B cell (primary cell): ENCODE measurements at regions of chr9 and their contacts with region 1.

Region 1: GRCh38 chr9:34637356-34638137 is at the start of gene SIGMAR1:
- DNase-seq: peak; percentile 96
- ATAC-seq: peak; percentile 96
- H3K4me3 ChIP-seq: peak within 1 kb of the TSS; percentile 49 to 80 (median 63)
- H3K4me3 Mint-ChIP-seq: peak within 1 kb of the TSS; percentile 92
- H3K27ac ChIP-seq: peak within 1 kb of the TSS; percentile 56 to 69
- H3K27ac Mint-ChIP-seq: peak within 1 kb of the TSS; percentile 86
- H3K4me1 ChIP-seq: peaks cover 16 to 32% of the 10 kb centered on the region in 2 donors
- H3K4me1 Mint-ChIP-seq: peaks cover 30% of the 10 kb centered on the region
- H3K27me3 ChIP-seq: no peaks in the 10 kb centered on the region
- H3K27me3 Mint-ChIP-seq: no peaks in the 10 kb centered on the region
- CTCF ChIP-seq: no peak
- total RNA-seq, gene SIGMAR1: 21.4 and 23.0 TPM in 2 replicates

Region 2: GRCh38 chr9:34437006-34437925 is 200.3 kb before region 1 on chr9:
- CTCF ChIA-PET with region 1: interaction called, 13 read pairs
- POLR2A ChIA-PET with region 1: no interaction called
- intact Hi-C with region 1: loop called (anchors 2 kb)
- DNase-seq: peak; percentile 81
- ATAC-seq: peak; percentile 65
- H3K4me3 ChIP-seq: no peak overlapping the region
- H3K4me3 Mint-ChIP-seq: no peak overlapping the region
- H3K27ac ChIP-seq: no peak overlapping the region
- H3K27ac Mint-ChIP-seq: no peak overlapping the region
- H3K4me1 ChIP-seq: no peaks in the 10 kb centered on the region
- H3K4me1 Mint-ChIP-seq: no peaks in the 10 kb centered on the region
- H3K27me3 ChIP-seq: no peaks in the 10 kb centered on the region
- H3K27me3 Mint-ChIP-seq: no peaks in the 10 kb centered on the region
- CTCF ChIP-seq: peak; percentile 82

Region 3: GRCh38 chr9:34500623-34501267 is 136.8 kb before region 1 on chr9:
- CTCF ChIA-PET with region 1: interaction called, 10 read pairs
- POLR2A ChIA-PET with region 1: no interaction called
- intact Hi-C with region 1: no loop called
- DNase-seq: peak; percentile 78
- ATAC-seq: peak; percentile 86
- H3K4me3 ChIP-seq: no peak overlapping the region
- H3K4me3 Mint-ChIP-seq: no peak overlapping the region
- H3K27ac ChIP-seq: no peak overlapping the region
- H3K27ac Mint-ChIP-seq: no peak overlapping the region
- H3K4me1 ChIP-seq: peaks cover 0 to 3% of the 10 kb centered on the region in 2 donors
- H3K4me1 Mint-ChIP-seq: no peaks in the 10 kb centered on the region
- H3K27me3 ChIP-seq: peaks cover 0 to 10% (median 3%) of the 10 kb centered on the region in 4 experiments
- H3K27me3 Mint-ChIP-seq: peaks cover 38% of the 10 kb centered on the region
- CTCF ChIP-seq: peak; percentile 98

Region 4: GRCh38 chr9:34577400-34578240 is 59.9 kb before region 1 on chr9:
- CTCF ChIA-PET with region 1: no interaction called
- POLR2A ChIA-PET with region 1: no interaction called
- intact Hi-C with region 1: no loop called
- DNase-seq: no peak
- ATAC-seq: no peak
- H3K4me3 ChIP-seq: peak overlapping the region in 1 of 5 experiments; percentile 7
- H3K4me3 Mint-ChIP-seq: peak overlapping the region; percentile 54
- H3K27ac ChIP-seq: no peak overlapping the region
- H3K27ac Mint-ChIP-seq: no peak overlapping the region
- H3K4me1 ChIP-seq: peaks cover 7 to 15% of the 10 kb centered on the region in 2 donors
- H3K4me1 Mint-ChIP-seq: peaks cover 12% of the 10 kb centered on the region
- H3K27me3 ChIP-seq: peaks cover 0 to 74% (median 28%) of the 10 kb centered on the region in 4 experiments
- H3K27me3 Mint-ChIP-seq: peaks cover 75% of the 10 kb centered on the region
- CTCF ChIP-seq: no peak

Region 5: DNA sequence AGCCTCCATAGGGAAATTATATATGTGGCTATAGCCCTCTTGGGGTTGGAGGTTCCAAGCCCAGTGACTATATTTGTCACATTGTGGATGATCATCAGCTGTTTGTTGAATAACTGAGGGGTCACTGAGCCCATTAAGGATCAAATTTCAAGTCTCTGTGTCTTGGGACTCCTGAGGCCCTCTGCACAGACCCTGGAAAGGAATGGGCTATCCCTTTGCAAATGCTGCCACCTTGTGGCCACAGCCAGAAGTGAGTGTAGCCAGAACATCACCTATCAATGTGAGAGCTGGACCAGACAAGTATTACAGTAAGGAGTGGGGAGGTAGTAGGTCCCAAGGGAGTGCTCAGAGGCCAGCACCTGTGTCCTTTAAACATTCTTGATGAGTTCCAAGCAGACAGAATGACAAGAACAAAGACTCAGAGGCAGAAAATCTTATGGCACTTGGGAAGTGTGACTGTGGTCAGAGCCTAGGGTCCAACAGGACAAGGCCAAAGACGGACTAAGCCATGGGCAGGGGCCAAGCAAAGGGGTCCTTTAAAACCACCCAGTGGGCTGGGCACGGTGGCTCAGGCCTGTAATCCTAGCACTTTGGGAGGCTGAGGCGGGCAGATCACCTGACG is 33.8 kb before region 1 on chr9:
- CTCF ChIA-PET with region 1: interaction called, 75 read pairs
- POLR2A ChIA-PET with region 1: no interaction called
- intact Hi-C with region 1: no loop called
- DNase-seq: peak; percentile 82
- ATAC-seq: peak; percentile 94
- H3K4me3 ChIP-seq: no peak overlapping the region
- H3K4me3 Mint-ChIP-seq: no peak overlapping the region
- H3K27ac ChIP-seq: no peak overlapping the region
- H3K27ac Mint-ChIP-seq: no peak overlapping the region
- H3K4me1 ChIP-seq: no peaks in the 10 kb centered on the region
- H3K4me1 Mint-ChIP-seq: no peaks in the 10 kb centered on the region
- H3K27me3 ChIP-seq: peaks cover 0 to 10% (median 0%) of the 10 kb centered on the region in 4 experiments
- H3K27me3 Mint-ChIP-seq: peaks cover 13% of the 10 kb centered on the region
- CTCF ChIP-seq: peak; percentile 91

Region 6: GRCh38 chr9:34620061-34620994 is 17.2 kb before region 1 on chr9 and contains the start of gene DCTN3:
- CTCF ChIA-PET with region 1: interaction called, 150 read pairs
- POLR2A ChIA-PET with region 1: interaction called, 11 read pairs
- intact Hi-C with region 1: loop called (anchors 2 kb)
- DNase-seq: peak; percentile 94
- ATAC-seq: peak; percentile 95
- H3K4me3 ChIP-seq: peak within 1 kb of the TSS; percentile 66 to 96 (median 81)
- H3K4me3 Mint-ChIP-seq: peak within 1 kb of the TSS; percentile 97
- H3K27ac ChIP-seq: peak within 1 kb of the TSS in 1 of 2 donors; percentile 49
- H3K27ac Mint-ChIP-seq: peak within 1 kb of the TSS; percentile 92
- H3K4me1 ChIP-seq: peaks cover 33 to 43% of the 10 kb centered on the region in 2 donors
- H3K4me1 Mint-ChIP-seq: peaks cover 36% of the 10 kb centered on the region
- H3K27me3 ChIP-seq: peaks cover 0 to 45% (median 30%) of the 10 kb centered on the region in 4 experiments
- H3K27me3 Mint-ChIP-seq: peaks cover 32% of the 10 kb centered on the region
- CTCF ChIP-seq: no peak
- total RNA-seq, gene DCTN3: 48.2 and 55.3 TPM in 2 replicates

Region 7: GRCh38 chr9:34701769-34702736 is 64.5 kb after region 1 on chr9:
- CTCF ChIA-PET with region 1: interaction called, 7 read pairs
- POLR2A ChIA-PET with region 1: no interaction called
- intact Hi-C with region 1: loop called (anchors 2 kb)
- DNase-seq: peak; percentile 80
- ATAC-seq: peak; percentile 76
- H3K4me3 ChIP-seq: peak overlapping the region; percentile 12 to 63 (median 55)
- H3K4me3 Mint-ChIP-seq: peak overlapping the region; percentile 88
- H3K27ac ChIP-seq: no peak overlapping the region
- H3K27ac Mint-ChIP-seq: no peak overlapping the region
- H3K4me1 ChIP-seq: peaks cover 10 to 14% of the 10 kb centered on the region in 2 donors
- H3K4me1 Mint-ChIP-seq: peaks cover 14% of the 10 kb centered on the region
- H3K27me3 ChIP-seq: peaks cover 0 to 23% (median 16%) of the 10 kb centered on the region in 4 experiments
- H3K27me3 Mint-ChIP-seq: peaks cover 30% of the 10 kb centered on the region
- CTCF ChIP-seq: peak; percentile 97